ENCODE measurements at regions of chr11 and their contacts with region 1.

Region 1: GRCh38 chr11:118051611-118052461 is 25.0 kb upstream of the TMPRSS4 start:
- DNase-seq: no peak
- ATAC-seq: no peak
- H3K4me3 ChIP-seq: no peak overlapping the region
- H3K27ac ChIP-seq: no peak overlapping the region
- H3K4me1 ChIP-seq: no peaks in the 10 kb centered on the region
- H3K27me3 ChIP-seq: peaks cover 9% of the 10 kb centered on the region; the same call in 1 of the 2 replicates
- CTCF ChIP-seq: no peak

Region 2: DNA sequence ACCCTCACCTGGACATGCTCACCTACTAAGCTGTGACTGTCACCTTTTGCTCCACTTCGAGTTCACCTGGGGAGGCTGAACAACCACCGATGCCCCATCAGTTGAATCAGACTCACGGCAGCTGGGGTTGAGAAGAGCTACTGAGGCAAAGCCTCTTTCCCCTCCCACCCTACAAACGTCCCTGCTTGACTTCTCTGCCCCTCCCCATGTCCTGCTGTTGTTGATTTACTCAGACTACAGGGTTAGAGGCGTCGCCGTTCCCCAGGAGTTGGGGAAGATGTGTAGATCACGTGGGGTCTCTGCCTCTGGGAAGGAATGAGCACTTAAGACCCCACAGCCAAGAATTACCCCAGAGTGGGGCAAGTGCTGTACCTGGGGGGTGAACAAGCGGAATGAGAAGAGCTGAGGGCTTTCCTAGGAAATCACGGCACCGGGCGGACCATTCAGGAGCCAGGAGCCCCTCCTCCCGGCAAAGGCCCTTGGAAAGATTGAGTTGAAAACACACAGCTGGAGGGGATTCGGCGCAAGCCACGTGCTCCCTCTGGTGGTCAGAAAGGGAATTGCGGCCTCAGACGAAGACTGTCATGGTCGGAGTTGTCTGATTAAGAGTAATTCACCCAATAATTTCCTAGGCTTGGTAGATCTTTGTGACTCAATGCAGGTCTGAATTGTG is 234.3 kb before region 1 on chr11:
- CTCF ChIA-PET with region 1: interaction called, 13 read pairs
- POLR2A ChIA-PET with region 1: no interaction called
- in situ Hi-C with region 1: no loop called
- intact Hi-C with region 1: loop called (anchors 5 kb)
- DNase-seq: peak; percentile 69
- ATAC-seq: peak; percentile 77
- H3K4me3 ChIP-seq: no peak overlapping the region
- H3K27ac ChIP-seq: 0 out of 2 replicates have a peak overlapping the region, but pooled peaks have one; percentile 4
- H3K4me1 ChIP-seq: peaks cover 20% of the 10 kb centered on the region
- H3K27me3 ChIP-seq: no peaks in the 10 kb centered on the region; the same call in 1 of the 2 replicates
- CTCF ChIP-seq: peak; percentile 100

Region 3: GRCh38 chr11:117843666-117844484 is 208.0 kb before region 1 on chr11:
- CTCF ChIA-PET with region 1: interaction called, 9 read pairs
- POLR2A ChIA-PET with region 1: no interaction called
- in situ Hi-C with region 1: no loop called
- intact Hi-C with region 1: loop called (anchors 1 kb)
- DNase-seq: peak; percentile 54
- ATAC-seq: peak; percentile 90
- H3K4me3 ChIP-seq: no peak overlapping the region
- H3K27ac ChIP-seq: no peak overlapping the region
- H3K4me1 ChIP-seq: no peaks in the 10 kb centered on the region
- H3K27me3 ChIP-seq: peaks cover 20% of the 10 kb centered on the region
- CTCF ChIP-seq: peak; percentile 98

Region 4: DNA sequence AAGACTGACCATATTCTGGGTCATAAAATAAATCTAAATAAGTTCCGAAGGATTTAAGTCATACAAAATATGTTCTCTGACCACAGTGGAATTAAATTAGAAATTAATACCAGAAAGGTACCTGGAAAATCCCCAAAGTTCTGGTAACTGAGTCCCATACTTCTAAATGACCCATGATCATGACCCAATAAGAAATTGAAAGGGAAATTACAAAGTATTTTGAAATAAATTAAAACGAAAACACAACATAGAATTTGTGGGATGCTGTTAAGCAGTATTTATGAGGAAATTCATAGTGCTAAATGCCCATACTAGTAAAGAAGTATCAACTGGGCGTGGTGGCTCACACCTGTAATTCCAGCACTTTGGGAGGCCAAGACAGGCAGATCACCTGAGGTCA is 89.0 kb before region 1 on chr11:
- CTCF ChIA-PET with region 1: no interaction called
- POLR2A ChIA-PET with region 1: no interaction called
- in situ Hi-C with region 1: no loop called
- intact Hi-C with region 1: no loop called
- DNase-seq: no peak
- ATAC-seq: no peak
- H3K4me3 ChIP-seq: no peak overlapping the region
- H3K27ac ChIP-seq: no peak overlapping the region
- H3K4me1 ChIP-seq: no peaks in the 10 kb centered on the region
- H3K27me3 ChIP-seq: no peaks in the 10 kb centered on the region; the same call in 1 of the 2 replicates
- CTCF ChIP-seq: no peak